CD4-positive, alpha-beta memory T cell (primary cell): ENCODE measurements at regions of chrX and their contacts with region 1.

Region 1: DNA sequence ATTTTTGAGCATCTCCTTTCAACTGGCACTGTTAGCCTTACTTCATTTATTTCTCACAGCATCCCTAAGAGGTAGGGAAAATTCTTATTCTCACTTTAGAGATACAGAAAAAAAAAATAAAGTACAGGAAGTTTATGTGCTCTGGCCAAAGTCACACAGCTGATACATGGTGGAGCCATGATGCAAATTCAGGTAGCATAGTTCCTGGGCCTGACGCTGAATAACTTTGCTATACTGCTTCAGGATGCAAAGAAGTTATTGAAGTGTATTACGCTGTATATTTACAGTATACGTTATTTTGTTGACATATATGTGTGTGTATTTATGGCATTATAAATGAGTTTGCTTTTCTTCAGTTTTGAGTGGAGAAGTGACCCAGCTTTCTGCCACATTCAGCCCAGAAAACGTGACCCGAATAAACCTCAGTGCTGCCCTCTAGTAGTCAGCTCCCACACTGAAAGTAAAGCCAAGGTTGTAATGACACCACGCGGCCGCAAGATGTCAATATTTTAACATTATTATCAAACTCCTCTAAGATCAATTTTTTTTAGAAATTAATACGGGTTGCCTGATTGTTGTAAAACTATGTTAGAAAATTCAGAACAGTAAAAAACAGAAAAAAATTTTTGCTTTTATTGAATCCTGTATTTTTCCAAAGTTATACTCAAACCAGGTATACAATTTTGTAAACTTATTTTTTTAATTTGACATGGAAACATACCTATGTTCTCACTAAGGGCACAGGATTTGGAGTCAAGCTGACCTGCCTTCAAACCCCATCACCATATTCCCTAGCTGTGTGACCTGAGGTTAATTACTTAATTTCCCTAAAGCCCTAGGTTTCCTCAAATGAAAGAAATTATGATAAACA is 3.8 kb upstream of the GUCY2F start:
- DNase-seq: peak; percentile 52 to 70 (median 66)
- H3K4me3 ChIP-seq: no peak overlapping the region
- H3K4me3 Mint-ChIP-seq: no peak overlapping the region
- H3K27ac ChIP-seq: no peak overlapping the region
- H3K27ac Mint-ChIP-seq: no peak overlapping the region
- H3K4me1 ChIP-seq: no peaks in the 10 kb centered on the region
- H3K4me1 Mint-ChIP-seq: no peaks in the 10 kb centered on the region
- H3K27me3 ChIP-seq: no peaks in the 10 kb centered on the region
- H3K27me3 Mint-ChIP-seq: no peaks in the 10 kb centered on the region

Region 2: GRCh38 chrX:109475174-109475891 is 10.4 kb before region 1 on chrX:
- CTCF ChIA-PET with region 1: interaction called, 13 read pairs
- POLR2A ChIA-PET with region 1: no interaction called
- intact Hi-C with region 1: no loop called
- DNase-seq: no peak
- H3K4me3 ChIP-seq: no peak overlapping the region
- H3K4me3 Mint-ChIP-seq: no peak overlapping the region
- H3K27ac ChIP-seq: no peak overlapping the region
- H3K27ac Mint-ChIP-seq: no peak overlapping the region
- H3K4me1 ChIP-seq: no peaks in the 10 kb centered on the region
- H3K4me1 Mint-ChIP-seq: peaks cover 0 to 3% (median under 1%) of the 10 kb centered on the region in 4 donors
- H3K27me3 ChIP-seq: no peaks in the 10 kb centered on the region
- H3K27me3 Mint-ChIP-seq: peaks cover 0 to 5% of the 10 kb centered on the region in 2 donors

Region 3: DNA sequence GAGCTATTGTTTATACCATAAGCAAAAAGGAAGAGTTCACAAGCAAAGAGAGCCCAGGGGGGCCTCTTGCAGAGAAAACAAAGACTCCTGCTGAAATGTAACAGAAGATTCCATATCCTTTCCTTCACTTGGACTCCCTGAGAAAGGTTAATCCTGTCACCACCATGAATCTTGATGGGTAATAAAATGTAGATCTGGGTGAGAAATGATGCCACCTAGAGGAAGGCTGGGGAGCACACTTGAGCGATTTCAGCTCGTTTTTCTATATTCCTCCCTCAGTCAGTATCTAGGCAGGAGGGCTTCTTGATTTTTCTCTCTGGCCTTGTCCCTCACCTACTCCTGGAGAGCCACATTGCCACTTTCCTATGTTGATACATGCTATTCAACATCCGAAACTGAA is 149.5 kb after region 1 on chrX:
- CTCF ChIA-PET with region 1: interaction called, 16 read pairs
- POLR2A ChIA-PET with region 1: no interaction called
- intact Hi-C with region 1: loop called (anchors 5 kb)
- DNase-seq: peak in 1 of 5 donors; percentile 0
- H3K4me3 ChIP-seq: no peak overlapping the region
- H3K4me3 Mint-ChIP-seq: no peak overlapping the region
- H3K27ac ChIP-seq: no peak overlapping the region
- H3K27ac Mint-ChIP-seq: no peak overlapping the region
- H3K4me1 ChIP-seq: no peaks in the 10 kb centered on the region
- H3K4me1 Mint-ChIP-seq: peaks cover 0 to 6% (median 2%) of the 10 kb centered on the region in 4 donors
- H3K27me3 ChIP-seq: no peaks in the 10 kb centered on the region
- H3K27me3 Mint-ChIP-seq: no peaks in the 10 kb centered on the region

Region 4: DNA sequence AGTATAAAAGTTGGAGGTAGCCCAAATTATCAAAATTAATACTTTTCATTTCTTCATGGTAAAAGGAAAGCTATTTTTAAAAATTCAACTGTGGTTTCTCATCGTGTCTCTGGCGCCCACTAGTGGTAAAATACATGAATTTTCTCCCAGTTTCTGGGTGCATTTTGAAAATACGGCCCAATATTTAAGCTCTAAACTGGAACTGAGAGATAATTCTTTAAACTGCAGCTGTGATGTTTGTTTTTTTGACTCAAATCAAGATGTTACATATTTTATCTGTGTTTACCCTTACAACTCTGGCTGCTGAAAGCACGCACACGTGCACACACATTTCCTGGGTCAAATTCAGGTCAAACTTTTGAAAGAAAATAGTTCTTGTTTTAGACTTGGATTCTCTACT is 371.3 kb after region 1 on chrX:
- CTCF ChIA-PET with region 1: interaction called, 10 read pairs
- POLR2A ChIA-PET with region 1: no interaction called
- intact Hi-C with region 1: loop called (anchors 1 kb)
- DNase-seq: peak; percentile 31 to 46 (median 37)
- H3K4me3 ChIP-seq: no peak overlapping the region
- H3K4me3 Mint-ChIP-seq: peak overlapping the region in 1 of 8 donors; percentile 20
- H3K27ac ChIP-seq: no peak overlapping the region
- H3K27ac Mint-ChIP-seq: no peak overlapping the region
- H3K4me1 ChIP-seq: no peaks in the 10 kb centered on the region
- H3K4me1 Mint-ChIP-seq: peaks cover 0 to 3% (median 0%) of the 10 kb centered on the region in 4 donors
- H3K27me3 ChIP-seq: no peaks in the 10 kb centered on the region
- H3K27me3 Mint-ChIP-seq: no peaks in the 10 kb centered on the region

Region 5: GRCh38 chrX:109911046-109911445 is 425.3 kb after region 1 on chrX:
- CTCF ChIA-PET with region 1: no interaction called
- POLR2A ChIA-PET with region 1: no interaction called
- intact Hi-C with region 1: no loop called
- DNase-seq: no peak
- H3K4me3 ChIP-seq: no peak overlapping the region
- H3K4me3 Mint-ChIP-seq: no peak overlapping the region
- H3K27ac ChIP-seq: no peak overlapping the region
- H3K27ac Mint-ChIP-seq: peak overlapping the region in 1 of 7 donors; percentile 26
- H3K4me1 ChIP-seq: no peaks in the 10 kb centered on the region
- H3K4me1 Mint-ChIP-seq: no peaks in the 10 kb centered on the region
- H3K27me3 ChIP-seq: no peaks in the 10 kb centered on the region
- H3K27me3 Mint-ChIP-seq: peaks cover 2 to 3% of the 10 kb centered on the region in 2 donors

Region 6: GRCh38 chrX:109922190-109922589 is 436.5 kb after region 1 on chrX:
- CTCF ChIA-PET with region 1: no interaction called
- POLR2A ChIA-PET with region 1: no interaction called
- intact Hi-C with region 1: no loop called
- DNase-seq: no peak
- H3K4me3 ChIP-seq: no peak overlapping the region
- H3K4me3 Mint-ChIP-seq: no peak overlapping the region
- H3K27ac ChIP-seq: no peak overlapping the region
- H3K27ac Mint-ChIP-seq: no peak overlapping the region
- H3K4me1 ChIP-seq: no peaks in the 10 kb centered on the region
- H3K4me1 Mint-ChIP-seq: no peaks in the 10 kb centered on the region
- H3K27me3 ChIP-seq: no peaks in the 10 kb centered on the region
- H3K27me3 Mint-ChIP-seq: no peaks in the 10 kb centered on the region